GM12878 (cell line): ENCODE measurements at regions of chr2 and their contacts with region 1.

Region 1: DNA sequence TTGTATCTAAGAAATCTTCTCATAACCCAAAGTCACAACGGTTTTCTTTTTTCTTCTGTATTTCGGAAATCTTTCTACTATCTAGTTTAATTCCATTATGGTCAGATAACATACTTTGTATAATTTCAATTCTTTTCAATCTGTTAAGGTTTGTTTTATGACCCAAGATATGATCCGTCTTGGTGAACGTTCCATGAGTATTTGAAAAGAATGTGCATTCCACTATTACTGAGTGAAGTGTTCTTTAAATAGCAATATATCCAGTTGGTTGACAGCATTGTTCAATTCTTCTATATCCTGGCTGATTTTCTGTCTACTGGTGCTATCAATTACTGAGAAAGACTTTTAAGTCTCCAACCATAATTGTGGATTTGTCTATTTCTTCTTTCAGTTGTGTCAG is 414.5 kb downstream of the TNS1 start:
- DNase-seq: no peak
- ATAC-seq: no peak
- H3K4me3 ChIP-seq: no peak overlapping the region
- H3K27ac ChIP-seq: no peak overlapping the region
- H3K4me1 ChIP-seq: no peaks in the 10 kb centered on the region
- H3K27me3 ChIP-seq: no peaks in the 10 kb centered on the region; a peak in 1 of 4 replicates
- CTCF ChIP-seq: no peak
- EP300 ChIP-seq: no peak
- POLR2A ChIP-seq: no peak
- RAD21 ChIP-seq: no peak

Region 2: DNA sequence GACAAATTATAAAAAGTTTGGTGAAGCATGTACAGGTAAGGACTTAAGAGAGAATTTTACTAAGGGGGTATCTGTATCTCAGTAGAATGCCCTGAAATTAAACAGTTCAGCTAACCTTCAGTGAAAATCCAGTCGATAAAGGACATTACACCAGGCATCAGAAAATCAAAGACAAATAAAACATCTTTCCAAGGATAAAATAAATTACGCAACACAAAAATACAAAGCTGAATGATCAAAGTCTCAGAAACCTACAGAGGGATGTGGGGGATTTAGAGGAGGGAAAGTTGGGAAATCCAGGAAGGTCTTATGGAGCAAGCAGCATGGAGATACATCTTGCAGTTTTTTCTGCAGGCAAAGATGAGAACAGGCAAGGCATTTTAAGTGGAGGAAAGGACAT is 30.5 kb after region 1 on chr2:
- CTCF ChIA-PET with region 1: interaction called, 4 read pairs
- POLR2A ChIA-PET with region 1: no interaction called
- RAD21 ChIA-PET with region 1: no interaction called
- SMC1A ChIA-PET with region 1: no interaction called
- in situ Hi-C with region 1: no loop called
- intact Hi-C with region 1: loop called (anchors 1 kb)
- DNase-seq: no peak
- ATAC-seq: no peak
- H3K4me3 ChIP-seq: no peak overlapping the region
- H3K27ac ChIP-seq: no peak overlapping the region
- H3K4me1 ChIP-seq: no peaks in the 10 kb centered on the region
- H3K27me3 ChIP-seq: peaks cover 1 to 3% of the 10 kb centered on the region in 2 experiments; a peak in 1 of 4 replicates
- CTCF ChIP-seq: no peak
- EP300 ChIP-seq: no peak
- POLR2A ChIP-seq: no peak
- RAD21 ChIP-seq: no peak

Region 3: DNA sequence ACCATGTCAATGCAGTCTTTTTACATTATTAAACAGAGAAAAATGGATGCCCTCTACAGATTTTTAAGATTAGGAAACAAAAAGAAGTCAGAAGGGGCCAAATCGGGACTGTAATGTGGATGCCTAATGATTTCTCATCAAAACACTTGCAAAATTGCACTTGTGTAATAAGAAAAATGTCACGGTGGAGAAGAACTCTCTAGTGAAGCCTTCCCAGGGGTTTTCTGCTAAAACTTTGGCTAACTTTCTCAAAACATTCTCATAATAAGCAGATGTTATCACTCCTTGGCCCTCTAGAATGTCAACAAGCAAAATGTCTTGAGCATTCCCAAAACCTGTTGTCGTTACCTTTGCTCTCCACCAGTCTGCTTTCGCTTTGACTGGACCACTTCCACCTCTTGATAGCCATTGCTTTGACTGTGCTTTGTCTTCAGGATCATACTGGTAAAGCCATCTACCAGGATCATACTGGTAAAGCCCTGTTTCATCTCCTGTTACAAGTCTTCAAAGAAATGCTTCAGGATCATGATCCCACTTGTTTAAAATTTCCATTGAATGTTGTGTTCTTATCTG is 187.7 kb after region 1 on chr2:
- CTCF ChIA-PET with region 1: no interaction called
- POLR2A ChIA-PET with region 1: no interaction called
- RAD21 ChIA-PET with region 1: no interaction called
- SMC1A ChIA-PET with region 1: no interaction called
- in situ Hi-C with region 1: no loop called
- intact Hi-C with region 1: no loop called
- DNase-seq: no peak
- ATAC-seq: no peak
- H3K4me3 ChIP-seq: no peak overlapping the region
- H3K27ac ChIP-seq: no peak overlapping the region
- H3K4me1 ChIP-seq: no peaks in the 10 kb centered on the region
- H3K27me3 ChIP-seq: no peaks in the 10 kb centered on the region
- CTCF ChIP-seq: no peak
- EP300 ChIP-seq: no peak
- POLR2A ChIP-seq: no peak
- RAD21 ChIP-seq: no peak